ENCODE measurements at regions of chr3 and their contacts with region 1.

Region 1: GRCh38 chr3:31227131-31227562 is 305.6 kb upstream of the STT3B start:
- DNase-seq: no peak
- H3K4me3 Mint-ChIP-seq: peak overlapping the region; percentile 2
- H3K27ac Mint-ChIP-seq: peak overlapping the region; percentile 84
- H3K4me1 Mint-ChIP-seq: peaks cover 87% of the 10 kb centered on the region
- H3K27me3 Mint-ChIP-seq: no peaks in the 10 kb centered on the region

Region 2: DNA sequence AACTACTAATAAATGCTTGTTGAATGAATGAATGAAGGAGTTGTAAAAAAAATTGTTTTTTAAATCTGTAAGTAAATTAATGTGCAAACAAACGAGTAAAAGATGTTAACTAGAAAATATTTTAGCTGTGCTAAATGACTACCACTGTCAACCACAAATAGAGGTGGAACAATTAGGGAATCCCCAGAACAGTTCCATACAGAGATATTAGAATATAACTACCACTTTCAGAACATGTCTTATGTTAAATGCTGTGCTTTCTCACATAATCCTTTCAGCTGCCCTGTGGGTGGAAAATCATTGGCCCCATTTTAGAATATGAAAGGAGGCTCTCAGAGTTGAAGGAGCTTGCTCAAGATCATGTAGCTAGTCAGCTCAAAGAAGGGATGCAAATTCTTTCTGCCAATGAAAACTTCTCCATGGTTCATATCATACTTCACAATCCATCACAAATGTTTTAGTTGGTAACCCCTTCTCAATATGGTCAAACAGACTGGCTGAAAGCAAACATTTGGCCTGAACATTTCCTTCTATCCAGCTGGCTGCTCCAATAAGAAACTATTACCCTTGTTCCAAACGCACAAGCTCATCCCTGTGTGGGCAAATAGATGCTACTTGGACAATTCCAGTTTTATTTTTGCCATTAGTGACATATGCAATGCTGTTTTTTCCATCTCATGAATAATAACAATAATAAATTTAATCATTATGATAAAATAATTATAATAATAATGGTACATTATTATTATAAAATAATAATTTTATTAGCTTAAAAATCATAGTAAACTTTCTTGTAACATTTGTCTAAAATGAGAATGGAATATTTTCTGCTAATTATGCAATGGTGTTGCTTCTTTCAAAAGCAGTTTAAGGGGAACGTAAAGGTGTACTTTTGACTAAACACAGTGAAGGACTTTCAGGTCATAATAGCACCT is 15.1 kb after region 1 on chr3:
- CTCF ChIA-PET with region 1: interaction called, 5 read pairs
- POLR2A ChIA-PET with region 1: interaction called, 3 read pairs
- intact Hi-C with region 1: loop called (anchors 1 kb)
- DNase-seq: no peak
- H3K4me3 Mint-ChIP-seq: no peak overlapping the region
- H3K27ac Mint-ChIP-seq: no peak overlapping the region
- H3K4me1 Mint-ChIP-seq: peaks cover 24% of the 10 kb centered on the region
- H3K27me3 Mint-ChIP-seq: no peaks in the 10 kb centered on the region